Dorsolateral prefrontal cortex (tissue), 120 donors: ENCODE measurements at regions of chr10 and their contacts with region 1.

Region 1: GRCh38 chr10:30783939-30784500 is 154.5 kb upstream of the LYZL2 start:
- DNase-seq: peak; percentile 76 to 94 (median 86)
- H3K4me3 ChIP-seq: peak overlapping the region; percentile 48 to 89 (median 79)
- H3K27ac ChIP-seq: peak overlapping the region; percentile 80 to 99 (median 98)
- H3K27me3 ChIP-seq: no peaks in the 10 kb centered on the region
- CTCF ChIP-seq: peak; percentile 47 to 93 (median 82)

Region 2: DNA sequence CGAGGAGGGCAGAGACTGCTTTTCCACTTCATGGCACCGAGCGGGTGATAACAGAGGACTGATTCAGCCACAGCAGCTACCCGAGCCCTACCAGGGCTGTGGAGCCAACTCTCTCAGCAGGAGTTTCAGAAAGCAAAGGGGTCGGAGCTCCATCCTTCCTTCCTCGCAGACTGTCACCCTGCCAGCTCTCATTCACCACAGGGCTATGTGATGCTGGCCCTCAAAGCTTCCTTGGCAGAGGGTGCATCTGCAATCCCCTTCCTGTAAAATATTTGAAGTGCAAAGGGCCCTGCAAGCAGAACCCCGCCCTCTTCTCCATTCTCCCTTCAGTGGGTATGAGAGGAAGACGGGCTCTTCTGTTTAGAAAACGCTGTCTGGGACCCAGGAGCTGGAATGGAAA is 49.1 kb before region 1 on chr10:
- intact Hi-C with region 1: no loop called
- DNase-seq: no peak
- H3K4me3 ChIP-seq: no peak overlapping the region
- H3K27ac ChIP-seq: no peak overlapping the region
- H3K27me3 ChIP-seq: no peaks in the 10 kb centered on the region
- CTCF ChIP-seq: no peak

Region 3: DNA sequence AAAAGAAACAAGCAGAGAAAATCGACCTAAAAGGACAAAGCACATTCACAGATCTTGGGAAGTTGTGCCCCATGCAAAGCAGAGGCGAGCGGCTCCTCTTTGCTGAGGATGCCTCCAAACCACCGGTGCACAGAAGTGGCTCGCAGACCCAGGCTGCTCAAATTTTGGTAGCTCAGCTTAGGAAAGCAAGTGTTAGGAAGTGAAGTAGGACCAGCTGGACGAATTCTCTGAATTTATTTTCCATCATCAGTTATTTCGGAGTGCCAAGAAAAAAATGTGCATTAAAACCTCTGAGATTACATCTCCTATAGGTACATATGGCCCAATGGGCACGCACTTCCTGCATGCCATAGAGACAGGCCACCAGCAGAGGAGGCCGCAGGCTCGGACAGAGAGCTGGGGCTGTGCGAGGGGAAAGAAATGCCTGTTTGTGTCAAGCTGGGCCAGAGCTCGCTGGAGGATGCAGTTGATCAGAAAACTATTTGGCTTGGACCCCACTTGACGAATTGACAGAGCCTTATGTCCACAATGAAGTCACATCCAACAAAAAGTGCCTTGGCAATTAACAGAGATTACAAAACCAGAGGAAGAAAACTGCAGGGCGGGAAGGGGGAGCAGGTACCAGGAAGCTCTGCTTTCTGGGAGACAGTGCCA is 32.2 kb before region 1 on chr10:
- intact Hi-C with region 1: loop called in 1 of 2 experiments (anchors 2 kb)
- DNase-seq: peak; percentile 14 to 92 (median 81)
- H3K4me3 ChIP-seq: peak overlapping the region in 9 of 59 donors; percentile 4 to 38 (median 11)
- H3K27ac ChIP-seq: peak overlapping the region; percentile 10 to 95 (median 82)
- H3K27me3 ChIP-seq: no peaks in the 10 kb centered on the region
- CTCF ChIP-seq: peak; percentile 51 to 99 (median 89)

Region 4: GRCh38 chr10:30893208-30893607 is 109.2 kb after region 1 on chr10:
- intact Hi-C with region 1: no loop called
- DNase-seq: no peak
- H3K4me3 ChIP-seq: no peak overlapping the region
- H3K27ac ChIP-seq: no peak overlapping the region
- H3K27me3 ChIP-seq: no peaks in the 10 kb centered on the region
- CTCF ChIP-seq: no peak

Region 5: GRCh38 chr10:30928742-30929141 is 144.7 kb after region 1 on chr10:
- intact Hi-C with region 1: no loop called
- DNase-seq: no peak
- H3K4me3 ChIP-seq: no peak overlapping the region
- H3K27ac ChIP-seq: no peak overlapping the region
- H3K27me3 ChIP-seq: no peaks in the 10 kb centered on the region
- CTCF ChIP-seq: no peak

Region 6: DNA sequence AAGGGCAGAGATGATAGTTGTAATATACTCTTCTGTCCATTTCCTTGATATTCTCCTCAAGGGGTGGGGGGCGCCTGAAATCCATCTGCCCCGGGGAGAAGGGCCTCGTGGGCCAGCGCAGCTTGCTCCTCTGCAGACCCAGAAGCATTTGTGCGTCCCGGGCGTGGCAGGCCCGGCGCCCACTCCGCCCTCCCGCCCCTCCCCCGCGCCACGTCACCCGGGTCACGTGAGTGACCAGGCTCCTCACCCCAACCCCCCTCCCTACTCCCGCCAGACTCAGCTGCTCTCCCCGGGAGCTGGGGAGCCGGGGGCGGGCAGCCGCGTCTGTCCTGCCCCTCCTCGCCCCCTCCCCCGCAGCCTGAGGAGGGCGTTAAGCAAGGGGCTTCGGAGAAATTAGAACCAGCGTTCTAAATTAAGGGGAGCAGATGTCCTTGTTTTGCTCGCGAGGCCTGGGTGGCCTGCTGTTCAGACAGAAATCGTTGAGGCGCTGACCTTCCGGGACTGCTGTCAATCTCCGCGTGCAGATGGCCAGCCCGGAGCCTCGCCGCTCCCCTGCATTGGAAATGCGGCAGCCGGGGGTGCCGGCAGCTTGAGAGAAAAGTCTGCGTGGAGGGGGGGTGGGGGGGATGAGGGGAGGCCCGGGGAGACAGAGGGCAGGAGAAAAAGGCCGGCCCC is 349.7 kb after region 1 on chr10:
- intact Hi-C with region 1: loop called (anchors 2 kb)
- DNase-seq: peak; percentile 73 to 86 (median 78)
- H3K4me3 ChIP-seq: peak overlapping the region; percentile 43 to 74 (median 62)
- H3K27ac ChIP-seq: peak overlapping the region; percentile 78 to 98 (median 93)
- H3K27me3 ChIP-seq: no peaks in the 10 kb centered on the region
- CTCF ChIP-seq: peak in 7 of 56 donors; percentile 2 to 34 (median 16)

Region 7: GRCh38 chr10:31603235-31604087 is 819.4 kb after region 1 on chr10:
- intact Hi-C with region 1: loop called in 1 of 2 experiments (anchors 10 kb)
- DNase-seq: peak; percentile 28 to 89 (median 74)
- H3K4me3 ChIP-seq: peak overlapping the region; percentile 41 to 97 (median 79)
- H3K27ac ChIP-seq: peak overlapping the region in 56 of 59 donors; percentile 3 to 86 (median 72)
- H3K27me3 ChIP-seq: no peaks in the 10 kb centered on the region
- CTCF ChIP-seq: peak in 3 of 56 donors; percentile 14 to 19 (median 16)

Region 8: GRCh38 chr10:31808258-31809218 is 1024.5 kb after region 1 on chr10:
- intact Hi-C with region 1: loop called (anchors 2 to 5 kb)
- DNase-seq: peak in 2 of 10 donors; percentile 11 to 25
- H3K4me3 ChIP-seq: peak overlapping the region in 57 of 59 donors; percentile 0 to 63 (median 42)
- H3K27ac ChIP-seq: peak overlapping the region in 52 of 59 donors; percentile 2 to 85 (median 69)
- H3K27me3 ChIP-seq: no peaks in the 10 kb centered on the region
- CTCF ChIP-seq: peak; percentile 67 to 95 (median 81)